ENCODE measurements at regions of chr11 and their contacts with region 1.

Region 1: DNA sequence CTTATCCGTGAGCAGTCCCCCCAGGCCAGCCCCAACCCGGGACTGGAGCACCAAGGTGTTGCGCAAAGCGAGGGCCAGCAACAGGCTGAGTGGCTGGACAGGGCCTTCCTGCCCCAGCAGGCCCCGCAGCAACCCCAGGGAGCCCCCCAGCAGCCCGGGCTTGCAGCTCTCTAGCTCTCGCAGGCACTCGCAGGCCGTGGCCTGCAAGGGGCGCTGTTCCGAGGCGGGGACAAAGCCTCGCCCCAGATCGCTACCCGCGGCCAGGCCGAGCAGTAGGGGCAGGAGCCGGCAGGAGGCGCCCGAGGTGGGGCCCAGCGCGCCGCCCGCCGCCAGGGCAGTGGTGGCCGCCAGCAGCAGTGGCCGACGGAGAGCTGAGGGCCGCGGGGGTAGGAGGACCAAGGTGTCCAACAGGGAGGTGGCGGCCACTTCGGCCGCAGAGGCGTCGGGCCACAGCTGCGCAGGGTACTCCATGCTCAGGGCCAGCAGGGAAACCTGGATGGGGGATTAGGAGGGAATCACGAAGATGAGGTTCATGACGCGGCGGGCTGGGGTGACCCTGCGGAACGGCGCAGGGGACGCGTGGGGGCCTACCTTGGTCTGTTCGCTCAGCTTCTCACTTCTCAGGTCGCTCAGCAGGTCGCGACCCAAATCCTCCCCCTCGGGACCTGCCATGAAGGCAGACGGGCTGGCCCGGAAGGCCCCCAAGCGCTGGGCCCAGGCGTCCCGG is 762 bp downstream of the AP5B1 start:
- DNase-seq: peak; percentile 74 to 79 (median 77)
- H3K4me3 ChIP-seq: peak overlapping the region; percentile 54 to 65
- H3K4me3 Mint-ChIP-seq: peak overlapping the region; percentile 74 to 89 (median 84)
- H3K27ac ChIP-seq: peak overlapping the region; percentile 62
- H3K27ac Mint-ChIP-seq: peak overlapping the region in 6 of 7 donors; percentile 49 to 74 (median 72)
- H3K4me1 ChIP-seq: peaks cover 18% of the 10 kb centered on the region
- H3K4me1 Mint-ChIP-seq: peaks cover 5 to 20% (median 13%) of the 10 kb centered on the region in 4 donors
- H3K27me3 ChIP-seq: no peaks in the 10 kb centered on the region
- H3K27me3 Mint-ChIP-seq: no peaks in the 10 kb centered on the region

Region 2: DNA sequence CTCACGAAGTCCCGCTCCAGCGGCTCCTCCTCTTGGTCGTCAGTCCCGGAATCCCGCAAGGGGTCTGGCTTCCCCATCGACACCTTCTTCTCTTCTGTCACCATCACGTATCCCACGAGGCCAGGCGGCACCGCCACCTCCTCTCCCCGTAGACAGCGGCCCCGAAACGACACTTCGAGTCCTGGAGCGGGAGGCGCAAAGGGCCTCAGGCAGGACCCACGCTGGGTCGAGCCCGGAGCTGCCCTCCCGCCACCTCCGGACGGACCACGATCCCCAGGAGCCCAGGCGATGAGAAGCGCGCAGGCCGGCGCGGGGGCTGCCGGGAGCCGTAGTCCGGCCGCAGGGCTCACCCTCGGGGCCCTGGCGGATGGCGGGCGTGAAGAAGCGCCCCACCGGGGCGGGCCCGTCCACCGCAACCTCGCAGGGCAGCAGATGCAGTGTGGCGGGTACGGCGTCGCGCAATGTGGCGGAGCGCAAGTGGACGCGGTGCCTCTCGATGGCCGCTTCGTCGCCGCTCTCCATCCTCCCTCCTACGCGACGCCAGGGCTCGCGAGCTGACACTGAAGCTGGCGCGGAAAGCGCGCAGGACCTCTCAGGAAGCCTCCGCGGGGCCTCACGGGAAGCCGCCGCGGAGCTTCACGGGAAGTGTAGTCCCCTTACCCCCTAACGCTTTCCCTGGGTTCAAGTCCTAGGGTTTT is 59.6 kb before region 1 on chr11 and contains the start of gene RNASEH2C:
- CTCF ChIA-PET with region 1: interaction called, 5 read pairs
- POLR2A ChIA-PET with region 1: interaction called, 11 read pairs
- intact Hi-C with region 1: loop called (anchors 1 kb)
- DNase-seq: peak; percentile 70 to 79 (median 76)
- H3K4me3 ChIP-seq: peak within 1 kb of the TSS; percentile 86 to 87
- H3K4me3 Mint-ChIP-seq: peak within 1 kb of the TSS; percentile 89 to 93 (median 91)
- H3K27ac ChIP-seq: peak within 1 kb of the TSS; percentile 68
- H3K27ac Mint-ChIP-seq: peak within 1 kb of the TSS; percentile 85 to 94 (median 92)
- H3K4me1 ChIP-seq: peaks cover 24% of the 10 kb centered on the region
- H3K4me1 Mint-ChIP-seq: peaks cover 16 to 43% (median 29%) of the 10 kb centered on the region in 4 donors
- H3K27me3 ChIP-seq: no peaks in the 10 kb centered on the region
- H3K27me3 Mint-ChIP-seq: no peaks in the 10 kb centered on the region
- total RNA-seq, gene RNASEH2C: 69.1 to 69.7 TPM

Region 3: DNA sequence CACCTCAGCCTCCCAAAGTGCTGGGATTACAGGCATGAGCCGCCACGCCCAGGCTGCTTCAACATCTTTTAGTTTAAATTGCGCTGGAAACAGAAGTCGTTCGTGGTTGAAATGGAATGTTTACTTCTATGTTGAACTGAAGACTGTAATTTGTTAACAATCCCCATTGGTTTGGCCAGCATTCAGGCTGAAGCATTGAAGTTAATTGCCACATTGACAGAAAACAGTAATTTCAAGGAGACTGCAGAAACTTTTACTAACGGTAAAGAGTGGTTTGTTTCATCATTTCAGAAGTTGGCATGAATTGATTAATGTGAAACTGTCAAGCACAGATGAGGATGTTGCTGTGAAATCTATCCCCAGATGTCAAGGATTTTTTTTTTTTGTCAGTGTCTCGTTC is 13.5 kb before region 1 on chr11:
- CTCF ChIA-PET with region 1: interaction called, 22 read pairs
- POLR2A ChIA-PET with region 1: interaction called, 12 read pairs
- intact Hi-C with region 1: loop called (anchors 1 kb)
- DNase-seq: no peak
- H3K4me3 ChIP-seq: no peak overlapping the region
- H3K4me3 Mint-ChIP-seq: no peak overlapping the region
- H3K27ac ChIP-seq: no peak overlapping the region
- H3K27ac Mint-ChIP-seq: no peak overlapping the region
- H3K4me1 ChIP-seq: no peaks in the 10 kb centered on the region
- H3K4me1 Mint-ChIP-seq: peaks cover 0 to 3% (median 1%) of the 10 kb centered on the region in 4 donors
- H3K27me3 ChIP-seq: no peaks in the 10 kb centered on the region
- H3K27me3 Mint-ChIP-seq: no peaks in the 10 kb centered on the region

Region 4: GRCh38 chr11:65791691-65792213 is 11.7 kb after region 1 on chr11:
- CTCF ChIA-PET with region 1: interaction called, 20 read pairs
- POLR2A ChIA-PET with region 1: interaction called, 14 read pairs
- intact Hi-C with region 1: no loop called
- DNase-seq: peak in 4 of 5 donors; percentile 34 to 64 (median 42)
- H3K4me3 ChIP-seq: no peak overlapping the region
- H3K4me3 Mint-ChIP-seq: peak overlapping the region in 1 of 8 donors; percentile 16
- H3K27ac ChIP-seq: no peak overlapping the region
- H3K27ac Mint-ChIP-seq: peak overlapping the region in 1 of 7 donors; percentile 48
- H3K4me1 ChIP-seq: peaks cover 25% of the 10 kb centered on the region
- H3K4me1 Mint-ChIP-seq: peaks cover 4 to 35% (median 17%) of the 10 kb centered on the region in 4 donors
- H3K27me3 ChIP-seq: peaks cover 20% of the 10 kb centered on the region
- H3K27me3 Mint-ChIP-seq: peaks cover 16 to 18% of the 10 kb centered on the region in 2 donors

Region 5: GRCh38 chr11:65988791-65989592 is 209.0 kb after region 1 on chr11:
- CTCF ChIA-PET with region 1: interaction called, 7 read pairs
- POLR2A ChIA-PET with region 1: no interaction called
- intact Hi-C with region 1: loop called (anchors 1 kb)
- DNase-seq: peak; percentile 92 to 94 (median 93)
- H3K4me3 ChIP-seq: no peak overlapping the region
- H3K4me3 Mint-ChIP-seq: peak overlapping the region in 1 of 8 donors; percentile 3
- H3K27ac ChIP-seq: no peak overlapping the region
- H3K27ac Mint-ChIP-seq: peak overlapping the region; percentile 68 to 95 (median 86)
- H3K4me1 ChIP-seq: peaks cover 6% of the 10 kb centered on the region
- H3K4me1 Mint-ChIP-seq: peaks cover 5 to 7% (median 6%) of the 10 kb centered on the region in 4 donors
- H3K27me3 ChIP-seq: no peaks in the 10 kb centered on the region
- H3K27me3 Mint-ChIP-seq: no peaks in the 10 kb centered on the region

Measured in CD4-positive, alpha-beta memory T cell (primary cell).